BJ (cell line): ENCODE measurements at regions of chr2 and their contacts with region 1.

Region 1: GRCh38 chr2:42828487-42829425 is 36.4 kb upstream of the HAAO start:
- DNase-seq: no peak
- H3K4me3 ChIP-seq: no peak overlapping the region
- H3K27me3 ChIP-seq: no peaks in the 10 kb centered on the region
- CTCF ChIP-seq: peak; percentile 88

Region 2: DNA sequence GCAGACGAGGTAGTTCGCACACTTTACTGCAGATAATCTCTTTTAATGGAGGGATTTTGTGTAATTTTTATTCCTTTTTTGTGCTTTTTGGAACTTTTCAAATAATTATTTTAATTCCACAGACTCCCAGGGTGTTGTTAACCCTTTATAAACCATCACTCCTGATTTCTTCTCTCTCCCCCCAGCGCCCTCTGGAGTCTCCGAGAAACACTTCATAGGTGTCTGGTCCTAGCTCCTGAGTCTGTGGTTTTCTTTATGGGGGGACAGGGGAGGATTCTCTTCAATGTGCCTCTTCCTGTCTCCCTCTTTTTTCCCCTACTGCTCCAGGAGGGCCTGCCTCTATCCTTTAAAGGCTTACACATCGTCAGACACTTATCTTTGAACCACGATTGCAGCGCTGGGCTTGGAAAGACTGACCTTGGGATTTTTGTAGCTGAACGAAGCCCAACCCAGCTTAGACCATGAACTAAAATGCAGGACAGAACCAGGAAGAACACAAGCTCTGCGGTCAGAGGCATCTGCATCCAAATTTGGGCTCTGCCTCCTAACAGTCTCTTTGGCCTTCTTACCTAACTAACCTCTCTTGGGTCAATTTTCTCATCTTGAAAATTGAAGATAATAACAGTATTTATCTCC is 788.0 kb before region 1 on chr2:
- CTCF ChIA-PET with region 1: no interaction called
- POLR2A ChIA-PET with region 1: no interaction called
- DNase-seq: no peak
- H3K4me3 ChIP-seq: no peak overlapping the region
- H3K27me3 ChIP-seq: peaks cover 15% of the 10 kb centered on the region
- CTCF ChIP-seq: no peak

Region 3: GRCh38 chr2:42859006-42859552 is 30.3 kb after region 1 on chr2:
- CTCF ChIA-PET with region 1: interaction called, 35 read pairs
- POLR2A ChIA-PET with region 1: no interaction called
- DNase-seq: no peak
- H3K4me3 ChIP-seq: no peak overlapping the region
- H3K27me3 ChIP-seq: no peaks in the 10 kb centered on the region
- CTCF ChIP-seq: peak; percentile 91

Region 4: GRCh38 chr2:43484323-43484930 is 655.7 kb after region 1 on chr2:
- CTCF ChIA-PET with region 1: interaction called, 24 read pairs
- POLR2A ChIA-PET with region 1: no interaction called
- DNase-seq: peak; percentile 45
- H3K4me3 ChIP-seq: no peak overlapping the region
- H3K27me3 ChIP-seq: no peaks in the 10 kb centered on the region
- CTCF ChIP-seq: peak; percentile 46

Region 5: DNA sequence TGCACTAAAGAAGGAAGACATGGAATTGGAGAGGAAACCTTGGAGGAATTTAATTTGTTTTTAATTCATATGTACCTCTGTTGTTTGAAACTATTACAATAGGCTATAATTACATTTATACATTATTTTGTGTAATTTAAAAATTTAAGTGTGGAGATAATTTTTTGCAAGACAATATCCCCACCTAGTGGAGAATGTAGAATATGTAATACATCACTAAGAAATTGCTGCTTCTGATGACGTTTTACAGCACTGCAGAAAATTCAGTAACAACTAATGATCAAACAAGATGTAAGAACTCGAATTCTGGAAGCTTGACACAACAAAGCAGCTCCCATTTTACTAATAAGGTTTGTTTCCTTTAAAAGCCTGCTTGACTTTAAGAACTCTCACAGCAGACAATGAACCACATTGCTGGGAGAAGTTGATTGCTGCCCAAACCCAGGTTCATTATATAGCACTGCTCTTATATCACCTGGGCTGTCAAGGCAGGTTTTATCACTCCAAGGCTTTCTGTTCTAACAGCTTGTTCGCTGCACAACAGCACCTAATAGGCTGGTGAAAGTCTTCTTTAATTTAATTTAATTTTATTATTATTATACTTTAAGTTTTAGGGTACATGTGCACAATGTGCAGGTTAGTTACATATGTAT is 713.7 kb after region 1 on chr2:
- CTCF ChIA-PET with region 1: interaction called, 18 read pairs
- POLR2A ChIA-PET with region 1: no interaction called
- DNase-seq: no peak
- H3K4me3 ChIP-seq: no peak overlapping the region
- H3K27me3 ChIP-seq: no peaks in the 10 kb centered on the region
- CTCF ChIP-seq: peak; percentile 34

Region 6: DNA sequence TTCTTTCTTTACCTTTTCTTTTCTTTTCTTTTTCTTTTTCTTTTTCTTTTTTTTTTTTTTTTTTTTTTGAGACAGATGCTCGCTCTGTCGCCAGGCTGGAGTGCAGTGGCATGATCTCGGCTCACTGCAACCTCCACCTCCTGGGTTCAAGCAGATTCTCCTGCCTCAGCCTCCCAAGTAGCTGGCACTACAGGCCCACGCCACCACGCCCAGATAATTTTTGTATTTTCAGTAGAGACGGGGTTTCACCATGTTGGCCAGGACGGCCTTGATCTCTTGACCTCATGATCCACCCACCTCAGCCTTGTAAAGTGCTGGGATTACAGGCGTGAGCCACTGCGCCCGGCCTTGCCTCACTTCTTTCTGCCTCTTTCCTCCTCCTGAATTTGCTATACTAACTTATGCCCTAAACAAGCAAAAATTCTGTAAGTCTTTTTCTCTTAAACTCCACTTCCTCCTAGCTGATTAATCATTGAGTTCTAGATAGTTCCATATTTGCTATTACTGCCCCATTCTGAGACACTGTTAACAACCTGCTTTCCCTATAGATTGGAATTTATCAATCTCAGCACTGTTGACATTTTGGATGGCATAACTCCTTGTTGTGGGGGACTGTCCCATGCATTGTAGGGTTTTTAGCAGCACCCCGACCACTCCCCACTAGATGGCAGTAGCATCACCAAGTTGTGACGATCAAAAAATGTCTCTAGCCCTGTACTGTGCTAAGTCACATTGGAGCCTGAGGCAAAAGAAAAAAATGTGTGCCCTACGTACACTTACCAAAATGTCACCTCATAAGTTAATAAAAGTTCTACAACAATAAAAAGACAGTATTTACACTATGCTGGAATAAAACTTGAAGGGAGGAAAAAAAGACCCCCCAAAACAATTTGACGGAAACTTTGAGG is 783.5 kb after region 1 on chr2:
- CTCF ChIA-PET with region 1: interaction called, 10 read pairs
- POLR2A ChIA-PET with region 1: no interaction called
- DNase-seq: no peak
- H3K4me3 ChIP-seq: no peak overlapping the region
- H3K27me3 ChIP-seq: peaks cover 2% of the 10 kb centered on the region; the same call in 1 of the 2 replicates
- CTCF ChIP-seq: peak; percentile 86